Esophagus squamous epithelium (tissue), 5 donors: ENCODE measurements at regions of chr5 and their contacts with region 1.

Region 1: DNA sequence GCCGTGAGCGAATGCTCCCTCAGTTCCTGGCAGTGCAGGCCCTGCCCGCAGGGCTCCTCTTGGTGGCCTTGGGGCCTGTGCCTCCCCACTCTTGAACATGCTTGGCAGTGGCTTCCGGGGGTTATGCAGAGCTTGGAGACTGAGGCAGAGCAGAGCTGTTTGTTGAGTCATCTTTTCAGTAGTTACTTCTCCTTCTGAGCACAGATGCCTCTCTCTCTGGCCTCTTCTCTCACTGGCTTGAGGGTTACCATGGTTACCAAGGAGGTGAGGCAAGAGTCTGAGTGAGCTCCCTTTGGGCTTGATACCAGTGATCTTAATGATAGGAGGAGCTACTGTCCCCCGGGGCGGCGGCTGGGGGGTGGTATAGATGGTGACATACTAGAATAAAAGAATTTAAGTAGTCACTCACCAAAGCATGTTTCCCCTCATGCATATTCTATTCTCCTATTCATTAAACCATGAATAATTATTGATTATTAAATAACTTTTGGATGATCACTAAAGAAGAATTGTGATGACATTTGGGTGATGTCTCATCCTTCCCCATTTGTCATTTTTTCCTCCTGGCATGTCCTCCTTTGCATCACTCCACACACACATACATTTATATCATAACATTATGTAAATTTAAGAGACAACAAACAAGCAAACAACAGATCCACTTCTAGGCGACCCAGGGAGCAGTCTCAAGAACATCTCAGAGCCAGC is 111.1 kb downstream of the ARHGAP26 start:
- DNase-seq: no peak
- H3K4me3 ChIP-seq: no peak overlapping the region
- H3K27ac ChIP-seq: no peak overlapping the region
- H3K4me1 ChIP-seq: peaks cover 0 to 8% (median 0%) of the 10 kb centered on the region in 3 donors
- H3K27me3 ChIP-seq: no peaks in the 10 kb centered on the region
- CTCF ChIP-seq: no peak
- POLR2A ChIP-seq: no peak

Region 2: GRCh38 chr5:142716963-142717362 is 164.3 kb before region 1 on chr5:
- intact Hi-C with region 1: loop called (anchors 5 kb)
- DNase-seq: no peak
- H3K4me3 ChIP-seq: no peak overlapping the region
- H3K27ac ChIP-seq: peak overlapping the region in 1 of 4 donors; percentile 11
- H3K4me1 ChIP-seq: peaks cover 4 to 34% (median 7%) of the 10 kb centered on the region in 3 donors
- H3K27me3 ChIP-seq: peaks cover 0 to 16% (median 0%) of the 10 kb centered on the region in 4 donors
- CTCF ChIP-seq: peak in 5 of 6 experiments; percentile 12 to 56 (median 30)
- POLR2A ChIP-seq: no peak